Heart right ventricle (tissue), 16 donors: ENCODE measurements at regions of chr1 and their contacts with region 1.

Region 1: GRCh38 chr1:61035880-61036279 is 46.5 kb upstream of the NFIA start:
- DNase-seq: no peak
- ATAC-seq: no peak
- H3K4me3 ChIP-seq: no peak overlapping the region
- H3K27ac ChIP-seq: no peak overlapping the region
- H3K4me1 ChIP-seq: no peaks in the 10 kb centered on the region
- H3K27me3 ChIP-seq: no peaks in the 10 kb centered on the region
- CTCF ChIP-seq: no peak

Region 2: GRCh38 chr1:60989749-60990713 is 45.8 kb before region 1 on chr1:
- intact Hi-C with region 1: loop called in 1 of 10 experiments (anchors 5 kb)
- DNase-seq: peak; percentile 33 to 71
- ATAC-seq: peak; percentile 60 to 85 (median 80)
- H3K4me3 ChIP-seq: no peak overlapping the region
- H3K27ac ChIP-seq: peak overlapping the region; percentile 26 to 86 (median 70)
- H3K4me1 ChIP-seq: peaks cover 3 to 39% (median 22%) of the 10 kb centered on the region in 9 donors
- H3K27me3 ChIP-seq: no peaks in the 10 kb centered on the region
- CTCF ChIP-seq: no peak

Region 3: DNA sequence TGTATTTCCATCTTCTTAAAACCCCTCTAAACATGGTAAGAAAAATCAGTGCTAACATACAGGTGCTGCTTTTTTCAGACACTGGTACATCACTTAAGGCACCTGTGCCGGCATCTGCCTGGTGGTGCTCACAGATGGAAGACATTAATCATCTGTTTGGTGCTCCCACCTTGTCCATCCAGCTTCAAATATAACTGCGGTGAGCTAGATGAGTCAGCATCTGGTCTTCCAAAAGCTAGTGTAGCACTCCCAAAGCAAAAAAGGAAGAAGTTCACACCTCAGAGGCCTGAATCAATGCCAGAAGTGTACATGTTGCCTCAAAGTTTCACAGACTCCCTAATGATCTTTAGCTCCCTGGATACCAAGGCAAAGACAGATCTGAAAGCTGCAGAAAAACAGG is 644.6 kb after region 1 on chr1:
- intact Hi-C with region 1: no loop called
- DNase-seq: no peak
- ATAC-seq: no peak
- H3K4me3 ChIP-seq: no peak overlapping the region
- H3K27ac ChIP-seq: no peak overlapping the region
- H3K4me1 ChIP-seq: no peaks in the 10 kb centered on the region
- H3K27me3 ChIP-seq: no peaks in the 10 kb centered on the region
- CTCF ChIP-seq: no peak